ENCODE measurements at regions of chr13 and their contacts with region 1.

Region 1: GRCh38 chr13:67867206-67867605 is 637.1 kb upstream of the PCDH9 start:
- DNase-seq: no peak
- ATAC-seq: no peak
- H3K4me3 ChIP-seq: no peak overlapping the region
- H3K4me3 Mint-ChIP-seq: no peak overlapping the region
- H3K27ac ChIP-seq: no peak overlapping the region
- H3K27ac Mint-ChIP-seq: no peak overlapping the region
- H3K4me1 ChIP-seq: no peaks in the 10 kb centered on the region
- H3K4me1 Mint-ChIP-seq: no peaks in the 10 kb centered on the region
- H3K27me3 ChIP-seq: no peaks in the 10 kb centered on the region
- H3K27me3 Mint-ChIP-seq: no peaks in the 10 kb centered on the region
- CTCF ChIP-seq: no peak

Region 2: DNA sequence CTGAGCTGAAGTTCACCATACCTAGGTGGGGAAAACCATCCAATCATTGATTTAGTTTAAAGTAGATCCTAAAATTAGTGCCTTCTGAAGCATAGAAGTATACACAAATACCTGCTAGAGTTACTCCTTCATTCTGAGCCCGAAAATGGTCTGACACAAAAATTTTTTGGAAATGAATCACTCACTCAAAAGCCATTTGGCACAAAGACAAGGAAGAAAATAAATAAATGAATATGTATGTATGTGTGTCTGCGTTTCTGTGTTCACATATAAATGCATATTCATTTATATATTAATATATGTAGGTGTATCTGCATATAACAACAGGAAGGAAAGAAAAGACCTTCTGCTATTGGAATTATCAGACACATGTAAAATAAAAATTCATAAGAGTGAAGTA is 22.6 kb before region 1 on chr13:
- CTCF ChIA-PET with region 1: no interaction called
- POLR2A ChIA-PET with region 1: no interaction called
- intact Hi-C with region 1: loop called in 1 of 2 experiments (anchors 2 kb)
- DNase-seq: no peak
- ATAC-seq: no peak
- H3K4me3 ChIP-seq: no peak overlapping the region
- H3K4me3 Mint-ChIP-seq: no peak overlapping the region
- H3K27ac ChIP-seq: no peak overlapping the region
- H3K27ac Mint-ChIP-seq: no peak overlapping the region
- H3K4me1 ChIP-seq: no peaks in the 10 kb centered on the region
- H3K4me1 Mint-ChIP-seq: no peaks in the 10 kb centered on the region
- H3K27me3 ChIP-seq: no peaks in the 10 kb centered on the region
- H3K27me3 Mint-ChIP-seq: no peaks in the 10 kb centered on the region
- CTCF ChIP-seq: no peak